Naive thymus-derived CD4-positive, alpha-beta T cell (primary cell): ENCODE measurements at regions of chr2 and their contacts with region 1.

Region 1: GRCh38 chr2:64052468-64053241 is 33.4 kb upstream of the VPS54 start:
- DNase-seq: peak in 7 of 9 donors; percentile 14 to 63 (median 44)
- ATAC-seq: peak; percentile 48
- H3K4me3 ChIP-seq: no peak overlapping the region
- H3K4me3 Mint-ChIP-seq: peak overlapping the region in 9 of 10 donors; percentile 23 to 68 (median 53)
- H3K27ac ChIP-seq: no peak overlapping the region
- H3K27ac Mint-ChIP-seq: peak overlapping the region in 8 of 9 donors; percentile 38 to 92 (median 85)
- H3K4me1 ChIP-seq: peaks cover 3 to 37% of the 10 kb centered on the region in 2 donors
- H3K4me1 Mint-ChIP-seq: peaks cover 35 to 62% (median 54%) of the 10 kb centered on the region in 7 donors
- H3K27me3 ChIP-seq: no peaks in the 10 kb centered on the region
- H3K27me3 Mint-ChIP-seq: peaks cover 0 to 3% (median 0%) of the 10 kb centered on the region in 5 donors

Region 2: DNA sequence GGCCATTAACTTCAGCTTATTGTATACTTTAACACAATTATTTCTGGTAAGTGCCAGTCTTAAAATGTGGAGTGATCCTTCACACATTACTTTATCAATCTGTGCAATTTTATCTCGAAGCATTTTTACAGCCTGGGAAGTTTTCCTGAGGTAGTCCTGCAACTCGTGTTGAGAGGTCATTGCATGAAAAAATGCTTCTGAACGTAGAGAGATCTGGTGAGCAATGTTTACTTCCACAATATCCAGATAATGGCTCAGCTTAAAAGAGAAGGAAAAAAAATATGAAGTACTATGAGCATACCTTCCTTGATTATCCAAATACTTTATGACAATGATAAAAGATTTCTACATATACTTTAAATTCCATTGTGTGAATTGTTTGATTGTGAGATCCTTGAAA is 90.5 kb before region 1 on chr2:
- CTCF ChIA-PET with region 1: no interaction called
- POLR2A ChIA-PET with region 1: no interaction called
- intact Hi-C with region 1: no loop called
- DNase-seq: no peak
- ATAC-seq: no peak
- H3K4me3 ChIP-seq: no peak overlapping the region
- H3K4me3 Mint-ChIP-seq: no peak overlapping the region
- H3K27ac ChIP-seq: no peak overlapping the region
- H3K27ac Mint-ChIP-seq: no peak overlapping the region
- H3K4me1 ChIP-seq: no peaks in the 10 kb centered on the region
- H3K4me1 Mint-ChIP-seq: no peaks in the 10 kb centered on the region
- H3K27me3 ChIP-seq: no peaks in the 10 kb centered on the region
- H3K27me3 Mint-ChIP-seq: no peaks in the 10 kb centered on the region

Region 3: DNA sequence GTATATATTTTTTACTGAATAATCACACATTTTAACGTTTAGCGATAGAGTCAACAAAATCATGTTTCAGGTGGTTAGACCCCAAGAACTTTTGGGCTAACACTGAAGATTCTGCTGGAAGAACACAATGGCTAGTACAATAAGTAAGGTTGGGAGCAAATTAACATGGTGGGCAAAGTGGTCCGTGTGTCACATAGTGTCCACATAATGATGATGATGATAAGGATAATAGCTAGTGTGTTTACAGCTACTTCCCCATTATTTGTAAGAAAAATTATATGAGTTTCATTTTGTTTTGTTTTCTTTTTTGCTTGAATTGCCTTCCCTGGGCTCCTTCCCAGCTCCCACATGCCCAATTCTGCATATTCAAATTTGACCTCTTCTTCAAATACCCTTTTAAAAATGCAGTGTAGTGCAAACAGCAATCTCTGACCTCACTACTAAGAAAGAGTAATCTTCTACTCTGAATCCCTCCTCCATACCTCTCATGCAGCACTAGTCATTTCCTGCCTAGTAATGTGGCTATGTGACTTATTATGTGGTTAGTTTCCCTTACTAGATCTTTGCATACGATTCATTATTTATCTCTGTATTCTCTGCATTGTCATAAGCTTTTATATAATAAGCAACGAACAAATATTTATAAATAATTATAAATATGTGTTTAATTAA is 16.5 kb before region 1 on chr2:
- CTCF ChIA-PET with region 1: interaction called, 9 read pairs
- POLR2A ChIA-PET with region 1: no interaction called
- intact Hi-C with region 1: loop called in 1 of 2 experiments (anchors 2 kb)
- DNase-seq: peak in 7 of 9 donors; percentile 60 to 75 (median 64)
- ATAC-seq: peak; percentile 98
- H3K4me3 ChIP-seq: peak overlapping the region; percentile 25
- H3K4me3 Mint-ChIP-seq: peak overlapping the region; percentile 30 to 86 (median 60)
- H3K27ac ChIP-seq: peak overlapping the region; percentile 54
- H3K27ac Mint-ChIP-seq: peak overlapping the region; percentile 49 to 93 (median 83)
- H3K4me1 ChIP-seq: peaks cover 20 to 42% of the 10 kb centered on the region in 2 donors
- H3K4me1 Mint-ChIP-seq: peaks cover 29 to 70% (median 54%) of the 10 kb centered on the region in 7 donors
- H3K27me3 ChIP-seq: no peaks in the 10 kb centered on the region
- H3K27me3 Mint-ChIP-seq: no peaks in the 10 kb centered on the region

Region 4: DNA sequence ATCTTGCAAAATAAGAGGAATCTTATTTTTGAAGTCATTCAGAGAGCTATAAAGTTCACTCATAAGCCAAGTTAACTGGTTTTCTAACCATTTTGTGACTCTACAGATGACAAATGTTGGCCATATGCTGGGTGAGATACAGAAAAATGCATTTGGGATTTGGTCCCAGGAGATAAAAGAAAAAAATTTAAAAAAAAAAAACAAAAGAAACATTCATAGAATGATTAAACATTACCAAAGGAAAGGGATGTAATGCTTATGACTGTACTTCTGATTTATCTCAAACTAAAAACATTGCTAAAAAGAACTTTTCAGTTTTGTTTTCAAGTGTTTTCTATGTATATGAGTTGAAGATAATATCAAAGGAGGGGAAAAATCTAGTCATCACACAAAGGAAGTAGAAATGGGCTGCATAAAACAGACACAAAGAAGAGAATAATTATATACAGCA is 48.5 kb after region 1 on chr2:
- CTCF ChIA-PET with region 1: interaction called, 3 read pairs
- POLR2A ChIA-PET with region 1: interaction called, 11 read pairs
- intact Hi-C with region 1: loop called in 1 of 2 experiments (anchors 1 kb)
- DNase-seq: peak in 6 of 9 donors; percentile 10 to 57 (median 44)
- ATAC-seq: peak; percentile 56
- H3K4me3 ChIP-seq: no peak overlapping the region
- H3K4me3 Mint-ChIP-seq: peak overlapping the region in 9 of 10 donors; percentile 18 to 83 (median 55)
- H3K27ac ChIP-seq: peak overlapping the region; percentile 33
- H3K27ac Mint-ChIP-seq: peak overlapping the region; percentile 44 to 88 (median 80)
- H3K4me1 ChIP-seq: peaks cover 0 to 16% of the 10 kb centered on the region in 2 donors
- H3K4me1 Mint-ChIP-seq: peaks cover 14 to 66% (median 60%) of the 10 kb centered on the region in 7 donors
- H3K27me3 ChIP-seq: no peaks in the 10 kb centered on the region
- H3K27me3 Mint-ChIP-seq: no peaks in the 10 kb centered on the region

Region 5: GRCh38 chr2:64488050-64488974 is 435.7 kb after region 1 on chr2:
- CTCF ChIA-PET with region 1: interaction called, 25 read pairs
- POLR2A ChIA-PET with region 1: interaction called, 3 read pairs
- intact Hi-C with region 1: loop called (anchors 1 kb)
- DNase-seq: peak; percentile 49 to 77 (median 67)
- ATAC-seq: peak; percentile 89
- H3K4me3 ChIP-seq: no peak overlapping the region
- H3K4me3 Mint-ChIP-seq: no peak overlapping the region
- H3K27ac ChIP-seq: no peak overlapping the region
- H3K27ac Mint-ChIP-seq: no peak overlapping the region
- H3K4me1 ChIP-seq: no peaks in the 10 kb centered on the region
- H3K4me1 Mint-ChIP-seq: peaks cover 3 to 16% (median 9%) of the 10 kb centered on the region in 7 donors
- H3K27me3 ChIP-seq: no peaks in the 10 kb centered on the region
- H3K27me3 Mint-ChIP-seq: peaks cover 0 to 37% (median 0%) of the 10 kb centered on the region in 5 donors

Region 6: GRCh38 chr2:64873472-64873924 is 820.8 kb after region 1 on chr2:
- CTCF ChIA-PET with region 1: no interaction called
- POLR2A ChIA-PET with region 1: no interaction called
- intact Hi-C with region 1: loop called (anchors 2 to 5 kb)
- DNase-seq: peak; percentile 51 to 87 (median 71)
- ATAC-seq: peak; percentile 93
- H3K4me3 ChIP-seq: no peak overlapping the region
- H3K4me3 Mint-ChIP-seq: peak overlapping the region in 6 of 10 donors; percentile 25 to 64 (median 46)
- H3K27ac ChIP-seq: no peak overlapping the region
- H3K27ac Mint-ChIP-seq: peak overlapping the region in 2 of 9 donors; percentile 46 to 63
- H3K4me1 ChIP-seq: peaks cover 0 to 3% of the 10 kb centered on the region in 2 donors
- H3K4me1 Mint-ChIP-seq: peaks cover 0 to 7% (median 7%) of the 10 kb centered on the region in 7 donors
- H3K27me3 ChIP-seq: no peaks in the 10 kb centered on the region
- H3K27me3 Mint-ChIP-seq: peaks cover 0 to 24% (median 4%) of the 10 kb centered on the region in 5 donors